A549 (cell line): ENCODE measurements at regions of chr9 and their contacts with region 1.

Region 1: GRCh38 chr9:86202338-86202882 is 57.0 kb downstream of the C9orf153 start:
- DNase-seq: peak; percentile 60 to 64
- ATAC-seq: peak; percentile 95 to 97
- H3K4me3 ChIP-seq: no peak overlapping the region
- H3K27ac ChIP-seq: no peak overlapping the region
- H3K4me1 ChIP-seq: no peaks in the 10 kb centered on the region
- CTCF ChIP-seq: peak; percentile 84
- EP300 ChIP-seq: no peak
- POLR2A ChIP-seq: no peak
- RAD21 ChIP-seq: peak; percentile 76 to 80

Region 2: DNA sequence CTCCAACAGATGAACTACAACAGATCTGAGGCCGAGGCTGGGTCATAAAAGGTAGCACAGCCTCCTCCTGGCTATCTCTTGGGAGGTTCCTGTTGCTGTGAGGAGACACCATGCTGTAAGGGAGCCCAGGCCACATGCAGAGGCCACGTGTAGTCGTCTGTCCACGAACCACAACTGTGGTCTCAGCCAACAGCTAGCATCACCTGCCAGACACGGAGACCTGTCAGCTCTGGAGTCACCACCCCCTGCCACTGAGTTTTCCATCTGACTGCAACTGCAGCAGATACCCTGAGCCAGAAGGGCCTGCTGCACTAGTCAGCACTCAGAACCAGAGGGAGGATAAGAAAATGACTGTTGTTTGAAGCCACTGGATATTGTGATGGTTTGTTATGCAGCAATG is 90.4 kb before region 1 on chr9:
- CTCF ChIA-PET with region 1: no interaction called
- POLR2A ChIA-PET with region 1: no interaction called
- DNase-seq: no peak
- ATAC-seq: no peak
- H3K4me3 ChIP-seq: no peak overlapping the region
- H3K27ac ChIP-seq: no peak overlapping the region
- H3K4me1 ChIP-seq: peaks cover 2% of the 10 kb centered on the region
- CTCF ChIP-seq: no peak
- EP300 ChIP-seq: no peak
- POLR2A ChIP-seq: no peak
- RAD21 ChIP-seq: no peak

Region 3: DNA sequence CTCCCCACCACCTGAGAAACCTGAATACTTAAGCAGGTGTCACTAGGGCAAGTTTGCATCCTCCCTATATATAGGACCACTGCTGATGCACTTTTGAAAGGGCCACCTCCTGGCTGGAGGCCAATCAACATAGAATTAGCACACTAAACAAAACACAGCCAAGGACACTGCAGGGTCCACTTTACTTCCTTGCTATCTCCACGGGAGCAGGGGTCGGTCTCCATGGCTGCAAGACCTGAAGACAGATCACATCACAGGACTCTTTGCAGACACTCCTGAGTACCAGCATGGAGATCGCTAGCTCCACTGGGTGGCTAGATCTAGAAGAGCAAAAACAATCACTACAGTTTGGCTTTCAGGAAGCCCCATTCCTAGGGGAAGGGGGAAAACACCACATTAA is 15.3 kb before region 1 on chr9:
- CTCF ChIA-PET with region 1: interaction called, 24 read pairs
- POLR2A ChIA-PET with region 1: no interaction called
- DNase-seq: peak in 1 of 2 experiments; percentile 26
- ATAC-seq: peak in 1 of 2 experiments; percentile 63; a peak in 2 of 6 replicates
- H3K4me3 ChIP-seq: no peak overlapping the region
- H3K27ac ChIP-seq: no peak overlapping the region
- H3K4me1 ChIP-seq: peaks cover 6% of the 10 kb centered on the region; the same call in 2 of the 3 replicates
- CTCF ChIP-seq: no peak
- EP300 ChIP-seq: no peak
- POLR2A ChIP-seq: no peak
- RAD21 ChIP-seq: peak; percentile 36 to 57; a peak in 4 of 5 replicates

Region 4: GRCh38 chr9:86222667-86223066 is 20.3 kb after region 1 on chr9:
- CTCF ChIA-PET with region 1: interaction called, 20 read pairs
- POLR2A ChIA-PET with region 1: no interaction called
- DNase-seq: no peak
- ATAC-seq: no peak
- H3K4me3 ChIP-seq: no peak overlapping the region
- H3K27ac ChIP-seq: no peak overlapping the region
- H3K4me1 ChIP-seq: no peaks in the 10 kb centered on the region
- CTCF ChIP-seq: no peak
- EP300 ChIP-seq: no peak
- POLR2A ChIP-seq: no peak
- RAD21 ChIP-seq: no peak

Region 5: GRCh38 chr9:86238861-86239770 is 36.7 kb after region 1 on chr9:
- CTCF ChIA-PET with region 1: interaction called, 26 read pairs
- POLR2A ChIA-PET with region 1: no interaction called
- DNase-seq: peak in 1 of 2 experiments; percentile 14
- ATAC-seq: peak; percentile 54 to 79; a peak in 3 of 6 replicates
- H3K4me3 ChIP-seq: no peak overlapping the region
- H3K27ac ChIP-seq: no peak overlapping the region
- H3K4me1 ChIP-seq: no peaks in the 10 kb centered on the region
- CTCF ChIP-seq: peak; percentile 51
- EP300 ChIP-seq: no peak
- POLR2A ChIP-seq: no peak
- RAD21 ChIP-seq: peak; percentile 50 to 71

Region 6: DNA sequence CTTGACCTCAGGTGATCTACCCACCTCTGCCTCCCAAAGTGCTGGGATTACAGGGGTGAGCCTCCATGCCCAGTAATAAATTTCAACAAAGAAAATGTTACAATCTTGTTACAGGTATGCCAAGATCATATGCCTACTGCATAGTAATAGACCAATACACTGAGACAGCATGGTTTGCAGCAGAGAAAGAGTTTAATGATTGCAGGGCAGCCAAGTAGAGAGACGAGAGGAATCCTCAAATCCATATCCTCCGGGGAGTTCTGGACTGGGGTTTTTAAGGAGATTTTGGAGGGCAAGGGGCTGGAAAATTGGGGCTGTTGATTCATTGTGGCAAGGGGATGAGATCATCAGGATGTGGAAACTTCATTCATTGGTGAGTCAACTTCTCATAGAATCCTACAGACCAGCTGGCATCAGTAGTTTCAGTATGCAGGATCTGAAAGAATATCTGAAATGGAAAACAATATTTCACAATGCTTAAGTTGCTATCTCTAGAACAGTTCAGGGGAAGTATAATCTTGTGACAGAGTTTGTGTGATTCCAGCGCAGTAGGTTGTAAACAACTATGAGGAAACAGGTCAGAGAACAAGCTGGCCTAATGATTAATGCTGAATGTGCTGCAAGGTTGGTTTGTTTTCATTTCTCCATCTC is 166.6 kb after region 1 on chr9:
- CTCF ChIA-PET with region 1: no interaction called
- POLR2A ChIA-PET with region 1: no interaction called
- DNase-seq: no peak
- ATAC-seq: no peak
- H3K4me3 ChIP-seq: no peak overlapping the region
- H3K27ac ChIP-seq: no peak overlapping the region
- H3K4me1 ChIP-seq: no peaks in the 10 kb centered on the region
- CTCF ChIP-seq: no peak
- EP300 ChIP-seq: no peak
- POLR2A ChIP-seq: no peak
- RAD21 ChIP-seq: no peak